Heart right ventricle (tissue), 16 donors: ENCODE measurements at regions of chr15 and their contacts with region 1.

Region 1: DNA sequence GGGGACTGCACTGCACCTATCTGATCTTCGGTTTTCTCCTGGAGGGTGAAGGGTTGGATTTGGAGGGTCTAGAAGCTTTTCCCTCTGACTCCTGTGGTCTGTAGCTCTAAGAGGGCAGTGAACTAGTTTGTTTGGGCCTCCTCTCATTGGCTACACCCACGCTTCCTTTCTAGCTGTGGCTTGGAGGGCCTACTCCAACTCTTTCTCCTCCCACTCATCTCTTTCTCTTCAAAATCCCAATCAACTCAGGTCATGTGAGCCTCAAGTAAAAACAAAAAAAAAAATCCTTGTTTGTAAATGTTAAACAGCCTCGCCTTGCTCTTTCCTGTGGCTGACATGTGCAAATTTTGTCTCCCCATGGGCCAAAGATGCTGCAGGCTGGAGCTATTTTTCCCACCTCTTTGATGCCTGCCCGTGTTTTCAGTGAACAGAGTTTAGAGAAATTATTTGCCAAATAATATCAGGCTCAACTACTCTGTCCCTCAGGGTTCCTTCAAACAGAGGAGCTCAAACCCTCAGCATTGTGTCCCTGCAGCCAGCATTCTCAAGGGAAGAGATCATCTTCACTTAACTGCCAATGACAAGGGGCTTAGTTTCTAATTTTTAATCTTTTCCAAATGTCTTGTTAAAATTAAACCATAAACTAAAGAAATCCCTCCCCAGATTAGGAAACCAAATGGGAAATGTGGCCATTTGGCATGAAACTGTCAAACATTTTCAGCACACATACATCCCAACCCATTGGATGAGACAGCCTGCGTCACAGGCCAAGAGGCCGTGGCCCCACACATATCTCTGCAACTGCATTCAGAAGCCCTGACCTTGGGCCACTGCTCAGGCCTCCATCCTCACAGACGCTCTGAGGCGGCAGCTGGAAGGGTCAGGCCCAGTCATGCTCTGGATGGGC is 114.8 kb upstream of the THBS1 start:
- DNase-seq: peak; percentile 76 to 77
- ATAC-seq: peak; percentile 69 to 89 (median 80)
- H3K4me3 ChIP-seq: no peak overlapping the region
- H3K27ac ChIP-seq: peak overlapping the region in 9 of 10 donors; percentile 33 to 86 (median 59)
- H3K4me1 ChIP-seq: peaks cover 4 to 66% (median 42%) of the 10 kb centered on the region in 9 donors
- H3K27me3 ChIP-seq: no peaks in the 10 kb centered on the region
- CTCF ChIP-seq: no peak

Region 2: GRCh38 chr15:39171944-39172368 is 294.1 kb before region 1 on chr15:
- intact Hi-C with region 1: loop called in 1 of 10 experiments (anchors 10 kb)
- DNase-seq: peak in 1 of 2 donors; percentile 44
- ATAC-seq: peak; percentile 81 to 96 (median 90)
- H3K4me3 ChIP-seq: no peak overlapping the region
- H3K27ac ChIP-seq: peak overlapping the region in 6 of 10 donors; percentile 12 to 62 (median 29)
- H3K4me1 ChIP-seq: peaks cover 0 to 20% (median 9%) of the 10 kb centered on the region in 9 donors
- H3K27me3 ChIP-seq: no peaks in the 10 kb centered on the region
- CTCF ChIP-seq: peak in 7 of 9 donors; percentile 8 to 66 (median 55)

Region 3: DNA sequence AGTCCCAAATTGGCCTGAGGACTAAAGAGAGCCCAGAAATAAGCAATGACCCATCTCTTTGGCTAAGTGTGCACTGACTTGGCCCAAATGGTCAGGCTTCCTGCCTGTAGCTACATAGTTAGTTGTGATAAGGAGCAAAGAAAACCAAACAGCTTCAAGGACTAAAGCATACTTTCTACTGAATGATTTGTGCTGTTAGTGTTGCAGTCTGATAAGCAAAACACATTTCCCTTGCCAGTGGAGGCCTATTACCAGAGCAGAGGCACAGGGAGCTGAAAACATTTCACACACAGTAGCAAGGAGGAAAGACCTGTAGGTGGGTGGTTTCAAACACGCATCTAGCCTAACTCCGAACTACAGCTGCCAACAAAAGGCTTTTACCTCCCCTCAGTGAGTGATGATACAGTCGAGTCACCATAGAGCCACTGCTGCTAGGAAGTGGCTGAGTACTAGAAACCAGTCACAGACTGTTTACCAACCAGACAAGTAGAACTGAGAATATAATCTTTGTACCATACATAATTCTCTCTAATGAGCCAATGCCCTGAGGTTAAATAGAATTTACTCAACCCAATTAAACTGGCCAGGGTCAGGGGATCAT is 107.6 kb before region 1 on chr15:
- intact Hi-C with region 1: no loop called
- DNase-seq: peak in 1 of 2 donors; percentile 54
- ATAC-seq: peak; percentile 83 to 93 (median 90)
- H3K4me3 ChIP-seq: no peak overlapping the region
- H3K27ac ChIP-seq: peak overlapping the region; percentile 49 to 83 (median 73)
- H3K4me1 ChIP-seq: peaks cover 5 to 35% (median 19%) of the 10 kb centered on the region in 9 donors
- H3K27me3 ChIP-seq: no peaks in the 10 kb centered on the region
- CTCF ChIP-seq: no peak

Region 4: GRCh38 chr15:40016224-40016865 is 550.2 kb after region 1 on chr15:
- intact Hi-C with region 1: no loop called
- DNase-seq: no peak
- ATAC-seq: no peak
- H3K4me3 ChIP-seq: no peak overlapping the region
- H3K27ac ChIP-seq: no peak overlapping the region
- H3K4me1 ChIP-seq: peaks cover 0 to under 1% (median 0%) of the 10 kb centered on the region in 9 donors
- H3K27me3 ChIP-seq: no peaks in the 10 kb centered on the region
- CTCF ChIP-seq: no peak